A673 (cell line): ENCODE measurements at regions of chr5 and their contacts with region 1.

Region 1: GRCh38 chr5:45521067-45521466 is 175.1 kb downstream of the HCN1 start:
- DNase-seq: peak; percentile 87
- H3K4me3 ChIP-seq: no peak overlapping the region
- H3K27ac ChIP-seq: no peak overlapping the region
- H3K4me1 ChIP-seq: no peaks in the 10 kb centered on the region
- H3K27me3 ChIP-seq: no peaks in the 10 kb centered on the region
- CTCF ChIP-seq: peak; percentile 87

Region 2: DNA sequence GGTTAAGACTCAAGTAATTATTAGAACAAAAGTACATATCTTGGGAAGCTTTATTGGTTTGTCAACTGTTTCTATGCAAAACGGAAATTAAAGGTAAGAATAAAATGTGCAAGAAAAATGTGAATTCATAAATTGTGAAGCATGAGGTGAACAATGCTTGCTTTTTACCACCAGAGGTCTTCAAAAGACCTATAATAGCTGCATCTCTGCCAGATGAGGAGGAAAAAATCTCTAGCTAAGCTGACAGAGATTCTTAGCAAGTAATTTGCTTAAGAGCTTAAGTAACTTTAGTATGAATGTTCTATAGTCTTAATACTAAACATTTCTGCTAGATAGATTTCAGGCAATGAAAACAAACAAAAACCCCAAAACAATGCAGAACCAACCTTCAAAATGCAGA is 658.3 kb before region 1 on chr5:
- CTCF ChIA-PET with region 1: no interaction called
- POLR2A ChIA-PET with region 1: no interaction called
- intact Hi-C with region 1: loop called (anchors 10 kb)
- DNase-seq: peak; percentile 35
- H3K4me3 ChIP-seq: no peak overlapping the region
- H3K27ac ChIP-seq: no peak overlapping the region
- H3K4me1 ChIP-seq: no peaks in the 10 kb centered on the region
- H3K27me3 ChIP-seq: no peaks in the 10 kb centered on the region
- CTCF ChIP-seq: peak; percentile 53

Region 3: GRCh38 chr5:44935262-44935661 is 585.8 kb before region 1 on chr5:
- CTCF ChIA-PET with region 1: interaction called, 5 read pairs
- POLR2A ChIA-PET with region 1: no interaction called
- intact Hi-C with region 1: loop called (anchors 5 kb)
- DNase-seq: peak; percentile 62
- H3K4me3 ChIP-seq: no peak overlapping the region
- H3K27ac ChIP-seq: no peak overlapping the region
- H3K4me1 ChIP-seq: no peaks in the 10 kb centered on the region
- H3K27me3 ChIP-seq: no peaks in the 10 kb centered on the region
- CTCF ChIP-seq: peak; percentile 72

Region 4: GRCh38 chr5:44952376-44952775 is 568.7 kb before region 1 on chr5:
- CTCF ChIA-PET with region 1: interaction called, 3 read pairs
- POLR2A ChIA-PET with region 1: no interaction called
- intact Hi-C with region 1: loop called (anchors 2 kb)
- DNase-seq: peak; percentile 80
- H3K4me3 ChIP-seq: no peak overlapping the region
- H3K27ac ChIP-seq: no peak overlapping the region
- H3K4me1 ChIP-seq: no peaks in the 10 kb centered on the region
- H3K27me3 ChIP-seq: no peaks in the 10 kb centered on the region
- CTCF ChIP-seq: peak; percentile 83

Region 5: DNA sequence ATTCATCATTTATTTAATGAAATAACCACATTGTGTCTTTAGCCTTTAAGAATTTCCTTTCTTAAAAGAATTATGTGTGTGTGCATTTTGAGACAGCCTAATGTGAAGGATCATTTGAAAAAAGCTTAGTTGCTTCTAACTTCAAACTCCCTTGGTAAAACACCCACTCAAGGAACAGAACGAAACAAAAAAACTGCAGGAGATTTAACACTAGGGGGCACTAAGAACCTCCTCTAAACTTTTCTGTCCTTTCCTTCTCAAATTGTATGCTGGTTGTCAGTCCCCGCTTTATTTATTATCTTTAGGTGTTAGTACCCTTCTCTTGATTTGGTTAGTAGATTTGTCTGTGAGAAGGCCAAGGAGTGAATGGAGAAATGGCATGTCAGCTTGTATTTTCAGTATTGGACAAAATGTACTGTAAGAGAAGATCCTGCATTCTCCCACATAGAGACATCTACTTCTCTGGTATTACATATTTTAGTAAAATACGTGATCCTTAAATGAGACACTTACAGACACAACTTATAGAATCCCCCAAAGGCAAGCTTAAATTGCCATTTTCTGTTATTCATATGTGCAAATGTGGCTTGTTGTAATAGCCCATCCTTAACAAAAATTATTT is 482.6 kb before region 1 on chr5:
- CTCF ChIA-PET with region 1: no interaction called
- POLR2A ChIA-PET with region 1: no interaction called
- intact Hi-C with region 1: loop called (anchors 1 kb)
- DNase-seq: peak; percentile 75
- H3K4me3 ChIP-seq: no peak overlapping the region
- H3K27ac ChIP-seq: no peak overlapping the region
- H3K4me1 ChIP-seq: no peaks in the 10 kb centered on the region
- H3K27me3 ChIP-seq: no peaks in the 10 kb centered on the region
- CTCF ChIP-seq: peak; percentile 73

Region 6: GRCh38 chr5:45532826-45533624 is 12.0 kb after region 1 on chr5:
- CTCF ChIA-PET with region 1: no interaction called
- POLR2A ChIA-PET with region 1: interaction called, 22 read pairs
- intact Hi-C with region 1: no loop called
- DNase-seq: no peak
- H3K4me3 ChIP-seq: no peak overlapping the region
- H3K27ac ChIP-seq: no peak overlapping the region
- H3K4me1 ChIP-seq: no peaks in the 10 kb centered on the region
- H3K27me3 ChIP-seq: peaks cover 13% of the 10 kb centered on the region
- CTCF ChIP-seq: no peak